ENCODE measurements at regions of chr9 and their contacts with region 1.

Region 1: GRCh38 chr9:120742951-120743416 is 28.7 kb upstream of the MEGF9 start:
- DNase-seq: peak in 2 of 9 experiments; percentile 35 to 51
- ATAC-seq: peak; percentile 51
- H3K4me3 ChIP-seq: no peak overlapping the region
- H3K4me3 Mint-ChIP-seq: no peak overlapping the region
- H3K27ac ChIP-seq: no peak overlapping the region
- H3K27ac Mint-ChIP-seq: no peak overlapping the region
- H3K4me1 ChIP-seq: no peaks in the 10 kb centered on the region
- H3K4me1 Mint-ChIP-seq: peaks cover 2% of the 10 kb centered on the region
- H3K27me3 ChIP-seq: no peaks in the 10 kb centered on the region
- H3K27me3 Mint-ChIP-seq: no peaks in the 10 kb centered on the region
- CTCF ChIP-seq: peak; percentile 61

Region 2: DNA sequence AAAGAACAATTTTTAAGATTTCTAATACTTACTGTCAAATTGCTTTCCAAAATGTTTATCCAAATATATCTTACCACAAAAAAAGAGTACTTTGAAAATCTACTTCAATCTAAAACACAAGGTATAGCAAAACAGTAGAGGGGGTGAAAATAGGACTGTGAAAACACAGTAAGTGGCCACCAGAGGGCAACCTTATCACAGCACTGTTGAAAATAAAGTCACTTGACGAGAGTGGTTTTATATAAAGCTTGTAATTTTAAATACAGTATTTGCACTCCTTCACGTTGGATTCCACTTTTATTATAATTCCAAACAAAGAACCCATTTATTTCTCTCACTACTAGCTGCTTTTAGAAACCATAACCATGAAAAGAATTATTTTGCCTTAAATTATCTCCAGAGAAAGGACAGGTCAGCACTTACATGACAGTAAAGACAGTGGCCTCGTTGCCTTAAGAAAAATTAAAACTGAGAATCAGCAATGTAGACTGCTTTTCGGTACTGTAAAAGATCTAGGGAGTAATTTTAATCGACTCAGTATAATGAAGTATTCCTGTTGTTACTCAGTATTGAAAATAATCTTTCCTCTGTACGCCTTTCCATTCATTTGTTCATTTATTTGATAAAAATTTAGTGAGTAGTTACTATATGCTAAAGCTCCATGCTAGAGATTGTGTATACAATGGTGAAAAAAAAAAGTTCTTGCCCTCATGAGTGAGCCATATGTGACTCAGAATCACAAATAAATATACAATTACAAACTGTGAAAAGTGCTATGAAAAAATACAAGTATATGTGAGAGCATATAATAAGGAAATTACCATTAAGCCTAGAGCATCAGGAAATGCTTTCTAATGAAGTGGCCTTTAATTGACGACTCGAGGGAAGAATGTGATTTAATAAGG is 123.0 kb before region 1 on chr9:
- CTCF ChIA-PET with region 1: interaction called, 3 read pairs
- POLR2A ChIA-PET with region 1: no interaction called
- intact Hi-C with region 1: loop called in 1 of 2 experiments (anchors 10 kb)
- DNase-seq: peak; percentile 8 to 76 (median 59)
- ATAC-seq: peak; percentile 65
- H3K4me3 ChIP-seq: no peak overlapping the region
- H3K4me3 Mint-ChIP-seq: no peak overlapping the region
- H3K27ac ChIP-seq: no peak overlapping the region
- H3K27ac Mint-ChIP-seq: no peak overlapping the region
- H3K4me1 ChIP-seq: no peaks in the 10 kb centered on the region
- H3K4me1 Mint-ChIP-seq: no peaks in the 10 kb centered on the region
- H3K27me3 ChIP-seq: no peaks in the 10 kb centered on the region
- H3K27me3 Mint-ChIP-seq: no peaks in the 10 kb centered on the region
- CTCF ChIP-seq: peak; percentile 98

Region 3: GRCh38 chr9:120696551-120697230 is 46.3 kb before region 1 on chr9:
- CTCF ChIA-PET with region 1: no interaction called
- POLR2A ChIA-PET with region 1: no interaction called
- intact Hi-C with region 1: loop called in 1 of 2 experiments (anchors 1 kb)
- DNase-seq: no peak
- ATAC-seq: no peak
- H3K4me3 ChIP-seq: no peak overlapping the region
- H3K4me3 Mint-ChIP-seq: no peak overlapping the region
- H3K27ac ChIP-seq: no peak overlapping the region
- H3K27ac Mint-ChIP-seq: no peak overlapping the region
- H3K4me1 ChIP-seq: peaks cover 7% of the 10 kb centered on the region
- H3K4me1 Mint-ChIP-seq: peaks cover 16% of the 10 kb centered on the region
- H3K27me3 ChIP-seq: no peaks in the 10 kb centered on the region
- H3K27me3 Mint-ChIP-seq: no peaks in the 10 kb centered on the region
- CTCF ChIP-seq: no peak